Left ventricle myocardium superior (tissue), 1 donor: ENCODE measurements at regions of chr12 and their contacts with region 1.

Region 1: DNA sequence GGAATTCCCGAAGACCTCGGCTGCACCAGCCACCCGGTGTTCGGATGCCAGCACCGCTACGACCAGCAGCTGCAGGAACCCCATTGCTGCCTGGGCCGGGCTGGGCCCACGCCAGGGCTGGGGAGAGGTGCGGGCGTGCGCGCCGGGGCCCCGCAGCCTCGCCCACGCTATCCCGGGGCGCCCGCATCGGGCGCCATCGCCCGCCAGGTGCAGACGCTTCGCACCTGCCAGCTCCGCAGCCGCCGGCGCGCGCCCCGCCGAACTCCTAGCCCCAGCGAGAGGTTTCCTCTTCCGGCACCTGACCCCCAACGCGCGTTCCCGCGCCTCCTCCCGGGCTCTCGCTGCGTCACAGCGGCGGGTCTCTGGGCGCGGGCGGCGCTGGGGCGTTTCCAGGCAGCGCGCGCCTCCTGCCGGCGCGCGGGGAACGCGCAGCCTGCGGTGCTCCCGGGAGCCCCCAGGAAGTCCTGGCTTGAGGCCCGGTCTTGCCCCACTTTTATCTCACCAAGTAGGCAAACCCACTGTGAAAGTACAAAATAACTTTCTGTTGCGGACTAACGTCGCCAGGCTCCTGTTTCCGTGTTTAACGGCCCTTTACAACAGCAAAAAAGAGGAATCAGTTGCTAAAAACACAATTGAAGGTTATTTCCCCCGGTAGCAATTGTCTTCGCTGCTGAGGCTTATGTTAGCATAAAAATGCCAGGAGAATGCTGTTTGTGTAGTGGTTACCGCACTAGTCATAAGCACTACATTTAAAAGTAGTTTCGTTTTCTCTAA is at the start of gene TM7SF3:
- DNase-seq: peak; percentile 96
- ATAC-seq: peak; percentile 96
- total RNA-seq, gene TM7SF3: 27.3 TPM

Region 2: DNA sequence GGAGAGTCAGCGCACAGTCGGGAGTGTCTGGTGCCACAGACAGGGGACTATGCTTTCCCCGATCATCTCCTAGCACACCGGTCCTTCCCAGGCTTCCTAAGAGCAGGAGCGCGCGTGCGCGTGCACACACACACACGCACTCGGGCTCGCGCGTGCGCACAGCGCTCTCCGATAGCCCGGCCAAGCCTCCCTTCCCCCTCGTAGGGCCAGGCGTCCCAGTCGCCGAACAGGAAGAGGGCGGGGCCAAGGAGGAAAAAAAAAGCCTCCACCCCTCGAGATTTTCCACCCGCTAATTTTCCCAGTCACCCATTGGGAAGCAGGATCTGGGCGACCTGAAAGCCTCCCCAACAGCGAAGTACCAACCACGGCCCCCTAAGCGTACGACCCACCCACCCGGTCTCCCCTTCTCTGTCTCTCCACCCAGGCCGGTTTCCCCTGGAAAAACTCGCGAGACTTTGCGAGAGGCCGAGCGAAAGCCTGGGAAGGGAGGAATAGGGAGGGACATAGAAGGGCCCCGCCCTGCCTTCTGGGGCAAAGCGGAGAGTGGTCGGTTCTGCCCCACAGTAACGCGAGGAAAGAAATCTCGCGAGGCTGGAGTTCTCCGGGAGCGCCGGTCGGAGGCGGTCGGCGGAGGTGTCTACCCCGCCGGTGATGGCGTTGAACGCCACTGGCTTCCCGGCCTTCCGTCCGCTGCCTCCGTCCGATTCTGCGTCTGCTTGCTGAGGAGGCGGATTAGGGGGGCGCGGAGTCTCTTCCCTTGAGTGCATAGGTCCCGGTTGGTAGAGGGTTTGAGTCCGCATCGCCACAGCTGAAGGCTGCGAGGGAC is 76.2 kb before region 1 on chr12 and contains the starts of genes FGFR1OP2 and INTS13:
- intact Hi-C with region 1: loop called (anchors 10 kb)
- DNase-seq: peak; percentile 100
- ATAC-seq: peak; percentile 97
- total RNA-seq, gene FGFR1OP2: 34.7 TPM
- total RNA-seq, gene INTS13: 23.9 TPM